ENCODE measurements at regions of chr3 and their contacts with region 1.

Region 1: DNA sequence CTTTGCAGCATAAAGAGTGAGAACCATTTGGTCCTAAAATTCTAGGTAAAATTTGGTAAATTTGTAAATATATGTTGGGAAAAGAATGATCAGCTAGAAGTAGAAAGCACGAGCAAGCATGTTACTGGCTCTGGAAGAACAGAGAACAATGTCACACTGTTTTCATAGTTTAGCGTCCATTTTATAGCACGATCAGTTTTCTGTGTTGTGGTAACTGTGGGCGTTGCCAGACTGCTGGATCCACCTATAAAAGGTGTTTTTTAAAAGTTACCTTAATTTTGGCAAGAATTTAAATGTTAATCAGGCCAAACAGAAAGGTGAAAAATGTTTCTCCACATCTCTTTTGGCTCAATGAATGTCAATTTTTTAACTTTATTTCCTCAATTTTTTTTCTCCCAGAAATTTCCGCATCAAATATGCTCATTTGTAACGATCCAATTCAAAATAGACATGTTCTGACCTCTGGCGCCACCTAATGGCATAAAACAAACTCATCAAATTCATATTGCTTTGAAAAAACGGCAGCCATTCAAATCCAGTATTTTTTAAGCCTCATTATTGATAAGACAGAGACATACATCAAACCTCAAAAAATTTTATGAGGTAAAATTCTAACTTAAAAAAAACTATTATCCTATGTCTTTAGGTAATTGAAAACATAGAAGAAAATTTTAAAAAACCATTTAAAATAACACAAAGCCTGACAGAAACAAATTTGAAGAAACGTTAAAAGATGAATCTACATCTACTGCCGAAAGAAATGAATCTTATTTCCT is 5.5 kb upstream of the GP5 start:
- DNase-seq: peak; percentile 65
- ATAC-seq: no peak
- H3K4me3 ChIP-seq: no peak overlapping the region
- H3K4me3 Mint-ChIP-seq: no peak overlapping the region
- H3K27ac ChIP-seq: no peak overlapping the region
- H3K27ac Mint-ChIP-seq: no peak overlapping the region
- H3K4me1 ChIP-seq: peaks cover 0 to 6% of the 10 kb centered on the region in 2 donors
- H3K4me1 Mint-ChIP-seq: peaks cover 2% of the 10 kb centered on the region
- H3K27me3 ChIP-seq: peaks cover 0 to 6% (median under 1%) of the 10 kb centered on the region in 4 experiments
- H3K27me3 Mint-ChIP-seq: peaks cover 5% of the 10 kb centered on the region
- CTCF ChIP-seq: peak; percentile 94

Region 2: DNA sequence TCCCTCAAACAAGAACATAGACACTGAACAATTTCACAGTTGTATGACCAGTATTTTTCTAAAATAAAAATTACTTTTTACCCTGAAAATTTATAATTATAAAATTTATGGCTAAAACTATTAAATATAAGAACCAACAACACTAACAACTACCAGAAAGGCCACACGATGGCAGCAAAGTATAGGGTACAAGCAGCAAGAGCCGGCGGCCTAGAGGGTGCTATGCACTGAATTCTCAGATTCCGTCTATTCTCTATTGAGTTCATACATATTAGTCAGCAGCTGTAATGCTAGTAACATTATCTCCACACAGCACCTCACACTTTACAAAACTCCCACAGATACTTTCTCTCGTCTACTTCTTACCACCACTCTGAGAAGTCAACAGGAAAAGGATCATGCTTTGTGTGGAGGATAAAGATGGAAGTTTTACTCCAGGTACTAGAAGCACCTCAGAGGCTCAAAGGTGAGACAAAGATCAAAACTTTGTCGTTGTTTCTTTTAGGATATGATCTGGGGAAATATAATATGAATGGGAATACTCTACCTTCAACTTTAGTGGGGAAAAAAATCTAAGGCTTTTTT is 1837.8 kb before region 1 on chr3:
- CTCF ChIA-PET with region 1: no interaction called
- POLR2A ChIA-PET with region 1: no interaction called
- intact Hi-C with region 1: loop called (anchors 10 kb)
- DNase-seq: peak; percentile 60
- ATAC-seq: peak; percentile 45
- H3K4me3 ChIP-seq: no peak overlapping the region
- H3K4me3 Mint-ChIP-seq: no peak overlapping the region
- H3K27ac ChIP-seq: no peak overlapping the region
- H3K27ac Mint-ChIP-seq: no peak overlapping the region
- H3K4me1 ChIP-seq: peaks cover 8 to 9% of the 10 kb centered on the region in 2 donors
- H3K4me1 Mint-ChIP-seq: peaks cover 9% of the 10 kb centered on the region
- H3K27me3 ChIP-seq: peaks cover 0 to 12% (median 7%) of the 10 kb centered on the region in 4 experiments
- H3K27me3 Mint-ChIP-seq: peaks cover 24% of the 10 kb centered on the region
- CTCF ChIP-seq: peak; percentile 80

Region 3: GRCh38 chr3:192706272-192706671 is 1698.3 kb before region 1 on chr3:
- CTCF ChIA-PET with region 1: no interaction called
- POLR2A ChIA-PET with region 1: no interaction called
- intact Hi-C with region 1: no loop called
- DNase-seq: no peak
- ATAC-seq: no peak
- H3K4me3 ChIP-seq: no peak overlapping the region
- H3K4me3 Mint-ChIP-seq: no peak overlapping the region
- H3K27ac ChIP-seq: no peak overlapping the region
- H3K27ac Mint-ChIP-seq: no peak overlapping the region
- H3K4me1 ChIP-seq: no peaks in the 10 kb centered on the region
- H3K4me1 Mint-ChIP-seq: no peaks in the 10 kb centered on the region
- H3K27me3 ChIP-seq: no peaks in the 10 kb centered on the region
- H3K27me3 Mint-ChIP-seq: no peaks in the 10 kb centered on the region
- CTCF ChIP-seq: no peak

Region 4: DNA sequence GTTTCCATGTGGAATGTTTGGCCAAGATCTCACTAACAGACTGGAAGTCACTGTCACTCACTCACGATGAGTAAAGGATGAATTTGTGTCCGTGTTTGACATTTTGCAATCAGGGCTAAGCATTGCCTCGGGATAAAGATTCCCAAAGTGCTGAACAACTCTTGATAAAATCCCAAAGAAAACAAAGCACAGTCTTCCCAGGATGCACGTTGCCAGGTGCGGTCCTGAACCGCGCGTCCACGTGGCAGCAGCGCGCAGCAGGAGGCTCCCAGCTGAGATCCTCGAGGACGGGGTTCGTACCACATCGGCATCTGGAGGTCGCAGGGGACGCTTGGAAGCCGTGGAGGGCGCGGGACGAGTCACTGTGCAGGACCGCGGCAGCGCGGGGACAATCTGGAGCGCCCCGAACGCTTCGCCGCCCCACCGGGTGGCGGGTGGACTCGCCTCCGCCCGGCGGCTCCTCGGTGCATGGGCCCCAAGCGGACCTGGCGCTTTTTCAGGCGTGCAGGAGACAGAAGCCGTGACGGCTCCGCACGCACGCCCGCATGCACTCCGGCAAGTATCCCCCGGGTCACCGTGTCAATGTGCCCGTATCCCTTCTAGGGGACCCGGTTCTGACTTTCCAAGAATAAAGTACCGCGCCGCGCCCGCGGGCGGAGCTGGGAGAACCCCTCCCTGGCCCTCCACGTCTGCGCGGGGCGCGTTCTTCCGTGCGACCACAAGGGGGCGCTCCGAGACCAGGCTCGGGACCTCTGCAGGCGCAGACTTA is 71.2 kb before region 1 on chr3:
- CTCF ChIA-PET with region 1: interaction called, 45 read pairs
- POLR2A ChIA-PET with region 1: no interaction called
- intact Hi-C with region 1: loop called (anchors 1 kb)
- DNase-seq: peak; percentile 91
- ATAC-seq: peak; percentile 96
- H3K4me3 ChIP-seq: peak overlapping the region in 4 of 5 experiments; percentile 15 to 62 (median 31)
- H3K4me3 Mint-ChIP-seq: peak overlapping the region; percentile 79
- H3K27ac ChIP-seq: no peak overlapping the region
- H3K27ac Mint-ChIP-seq: no peak overlapping the region
- H3K4me1 ChIP-seq: peaks cover 9 to 10% of the 10 kb centered on the region in 2 donors
- H3K4me1 Mint-ChIP-seq: peaks cover 7% of the 10 kb centered on the region
- H3K27me3 ChIP-seq: peaks cover 0 to 28% (median 7%) of the 10 kb centered on the region in 4 experiments
- H3K27me3 Mint-ChIP-seq: peaks cover 45% of the 10 kb centered on the region
- CTCF ChIP-seq: peak; percentile 99

Region 5: DNA sequence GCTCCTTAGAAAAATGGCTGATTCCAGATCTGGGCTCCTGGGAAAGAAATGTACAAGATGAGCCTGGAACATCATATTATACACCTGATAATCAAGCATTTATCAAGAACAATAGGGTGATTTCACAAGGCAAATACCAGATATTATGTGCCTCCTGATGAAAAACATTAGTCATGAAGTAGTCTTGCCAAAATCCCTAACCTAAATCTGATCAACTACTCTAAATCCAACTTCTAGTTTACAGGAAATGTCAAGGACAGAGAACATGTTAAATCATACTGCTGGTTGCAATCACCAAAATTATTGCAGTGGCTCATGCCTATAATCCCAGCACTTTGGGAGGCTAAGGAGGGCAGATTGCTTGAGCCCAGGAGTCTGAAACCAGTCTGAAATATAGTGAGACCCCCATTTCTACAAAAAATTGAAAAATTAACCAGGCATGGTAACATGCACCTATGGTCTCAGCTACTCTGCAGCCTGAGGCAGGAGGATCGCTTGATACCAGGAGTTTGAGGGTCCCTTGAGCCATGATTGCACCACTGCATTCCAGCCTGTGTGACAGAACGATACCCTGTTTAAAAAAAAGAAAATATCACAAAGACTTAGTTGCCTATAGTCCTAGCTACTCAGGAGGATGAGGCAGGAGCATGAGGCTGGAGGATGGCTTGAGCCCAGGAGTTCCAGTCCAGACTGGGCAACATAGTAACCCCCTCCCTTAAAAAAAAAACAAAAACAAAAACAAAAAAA is 117.1 kb after region 1 on chr3:
- CTCF ChIA-PET with region 1: no interaction called
- POLR2A ChIA-PET with region 1: no interaction called
- intact Hi-C with region 1: no loop called
- DNase-seq: no peak
- ATAC-seq: no peak
- H3K4me3 ChIP-seq: no peak overlapping the region
- H3K4me3 Mint-ChIP-seq: no peak overlapping the region
- H3K27ac ChIP-seq: no peak overlapping the region
- H3K27ac Mint-ChIP-seq: no peak overlapping the region
- H3K4me1 ChIP-seq: no peaks in the 10 kb centered on the region
- H3K4me1 Mint-ChIP-seq: peaks cover 1% of the 10 kb centered on the region
- H3K27me3 ChIP-seq: no peaks in the 10 kb centered on the region
- H3K27me3 Mint-ChIP-seq: peaks cover 3% of the 10 kb centered on the region
- CTCF ChIP-seq: no peak

Region 6: DNA sequence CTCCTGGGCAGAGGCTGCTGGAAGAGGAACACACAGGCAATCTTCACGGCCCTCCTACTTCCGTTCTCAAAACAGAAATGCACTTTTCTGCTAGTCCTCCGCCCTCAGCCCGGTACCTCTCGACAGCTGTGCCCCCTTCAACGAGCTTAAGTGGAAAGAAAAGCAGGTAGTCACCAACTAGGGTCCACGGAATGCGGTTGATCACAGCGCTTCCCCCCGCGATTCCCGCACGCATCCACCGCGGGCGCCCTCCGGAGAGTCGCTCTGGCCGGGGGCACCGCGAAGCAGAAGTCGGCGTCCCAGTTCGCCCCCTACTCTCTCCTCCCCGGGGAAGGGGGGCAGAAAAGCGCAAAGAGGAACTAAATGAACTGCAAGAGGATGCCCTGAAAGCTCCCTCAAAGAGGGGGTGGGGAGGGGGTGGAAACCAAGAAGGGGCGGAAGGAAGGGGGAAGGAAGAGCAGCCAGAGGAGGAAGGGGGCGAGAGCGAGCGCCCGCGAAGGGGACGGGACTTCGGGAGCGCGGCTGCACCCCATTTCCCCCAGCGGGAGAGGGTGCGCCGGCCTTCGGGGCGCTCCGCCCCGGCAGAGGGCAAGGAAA is 1037.5 kb after region 1 on chr3:
- CTCF ChIA-PET with region 1: no interaction called
- POLR2A ChIA-PET with region 1: no interaction called
- intact Hi-C with region 1: no loop called
- DNase-seq: peak; percentile 88
- ATAC-seq: peak; percentile 20
- H3K4me3 ChIP-seq: peak overlapping the region; percentile 69 to 92 (median 84)
- H3K4me3 Mint-ChIP-seq: peak overlapping the region; percentile 94
- H3K27ac ChIP-seq: peak overlapping the region; percentile 83 to 88
- H3K27ac Mint-ChIP-seq: peak overlapping the region; percentile 97
- H3K4me1 ChIP-seq: peaks cover 29 to 35% of the 10 kb centered on the region in 2 donors
- H3K4me1 Mint-ChIP-seq: peaks cover 43% of the 10 kb centered on the region
- H3K27me3 ChIP-seq: no peaks in the 10 kb centered on the region
- H3K27me3 Mint-ChIP-seq: no peaks in the 10 kb centered on the region
- CTCF ChIP-seq: no peak

Measured in B cell (primary cell).